ENCODE measurements at regions of chr12 and their contacts with region 1.

Region 1: DNA sequence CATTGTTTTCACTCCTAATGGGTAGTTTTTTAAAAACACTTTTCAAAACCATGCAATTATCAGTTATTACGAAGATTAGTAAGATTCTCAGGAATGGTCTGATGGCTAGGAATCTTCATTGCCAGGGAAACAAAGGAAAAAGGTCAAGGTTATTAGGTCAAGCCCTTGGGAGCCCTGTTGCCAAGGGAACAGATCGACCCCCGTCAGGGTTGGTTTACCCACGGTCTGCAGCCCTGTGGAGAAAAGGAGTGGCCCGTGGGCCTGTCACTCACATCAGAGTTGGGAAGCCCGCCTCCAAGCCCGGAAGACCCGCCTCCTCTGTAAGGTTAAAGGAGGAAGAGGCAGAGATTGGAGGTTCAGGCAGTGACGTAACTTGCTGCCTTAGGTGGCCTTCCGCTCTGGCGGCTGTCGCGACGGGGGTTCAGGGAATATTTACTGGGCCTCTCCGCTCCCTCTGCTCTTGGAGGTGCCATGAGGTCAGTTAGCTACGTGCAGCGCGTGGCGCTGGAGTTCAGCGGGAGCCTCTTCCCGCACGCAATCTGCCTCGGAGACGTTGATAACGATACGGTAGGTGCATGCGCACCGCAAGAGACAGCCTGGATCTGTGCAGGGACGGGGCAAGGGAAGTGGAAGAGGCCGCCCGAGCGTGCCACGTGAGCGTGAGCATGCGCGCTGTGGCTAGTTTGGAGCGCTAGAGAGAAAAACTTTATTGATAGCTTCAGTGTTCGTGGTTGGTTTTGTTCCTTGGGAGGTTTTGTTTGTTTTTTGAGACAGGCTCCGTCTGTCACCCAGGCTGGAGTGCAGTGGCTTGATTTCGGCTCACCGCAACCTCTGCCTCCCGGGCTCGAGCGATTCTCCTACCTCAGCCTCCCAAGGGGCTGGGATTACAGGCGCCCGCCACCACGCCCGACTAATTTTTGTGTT is at the start of gene ITFG2:
- DNase-seq: peak; percentile 90 to 98 (median 94)
- ATAC-seq: peak; percentile 91
- H3K4me3 ChIP-seq: peak within 1 kb of the TSS; percentile 82
- H3K4me3 Mint-ChIP-seq: peak within 1 kb of the TSS; percentile 96
- H3K27ac ChIP-seq: peak within 1 kb of the TSS; percentile 91 to 93
- H3K27ac Mint-ChIP-seq: peak within 1 kb of the TSS; percentile 99
- H3K4me1 ChIP-seq: peaks cover 18% of the 10 kb centered on the region
- H3K4me1 Mint-ChIP-seq: peaks cover 37% of the 10 kb centered on the region
- H3K27me3 ChIP-seq: no peaks in the 10 kb centered on the region
- H3K27me3 Mint-ChIP-seq: no peaks in the 10 kb centered on the region
- CTCF ChIP-seq: no peak
- total RNA-seq, gene ITFG2: 61.3 to 68.5 TPM

Region 2: DNA sequence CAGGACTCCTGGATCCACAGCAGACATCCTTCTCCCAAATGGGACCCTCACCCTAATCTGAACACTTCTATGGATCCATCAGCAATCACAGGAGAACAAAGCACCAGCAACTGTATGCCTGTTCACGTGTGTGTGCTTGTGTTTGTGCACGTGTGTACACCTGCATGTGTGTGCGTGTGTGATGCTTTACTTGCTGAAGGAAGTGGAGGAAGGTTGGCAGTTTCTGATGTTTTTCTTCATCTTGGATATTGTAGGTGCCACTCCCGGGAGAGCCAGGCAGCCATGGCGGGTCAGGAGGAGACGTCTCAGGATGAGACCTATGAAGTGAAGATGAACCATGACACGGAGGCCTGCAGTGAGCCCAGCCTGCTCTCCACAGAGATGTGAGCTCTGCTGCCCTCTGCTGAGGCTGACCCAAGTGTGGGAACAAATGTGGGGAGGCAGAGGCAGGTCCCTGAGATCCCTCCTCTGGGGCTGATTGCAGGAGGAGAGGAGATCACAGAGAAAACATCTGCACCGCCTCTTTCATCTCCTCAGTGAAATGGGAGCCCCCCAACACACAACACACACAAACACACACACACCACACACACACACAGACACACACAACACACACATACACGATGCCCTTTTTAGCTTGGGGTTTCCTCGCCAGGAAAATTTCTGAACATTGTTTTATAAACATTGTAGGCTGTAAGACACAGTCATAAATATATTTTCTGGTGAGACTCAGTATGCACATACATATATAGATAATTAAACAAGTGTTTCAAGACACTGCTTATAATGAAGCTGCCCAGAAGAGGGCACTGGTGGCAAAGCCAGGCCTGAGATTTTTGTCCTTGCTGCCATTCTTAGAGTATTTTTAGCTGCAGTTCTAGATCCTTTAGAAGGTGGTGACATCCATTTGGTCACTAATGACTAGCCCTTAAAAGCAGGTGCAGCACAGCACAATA is 130.0 kb before region 1 on chr12:
- CTCF ChIA-PET with region 1: interaction called, 12 read pairs
- POLR2A ChIA-PET with region 1: no interaction called
- intact Hi-C with region 1: loop called in 1 of 2 experiments (anchors 1 kb)
- DNase-seq: peak in 12 of 14 experiments; percentile 21 to 74 (median 37)
- ATAC-seq: peak; percentile 81
- H3K4me3 ChIP-seq: no peak overlapping the region
- H3K4me3 Mint-ChIP-seq: peak overlapping the region; percentile 40
- H3K27ac ChIP-seq: no peak overlapping the region
- H3K27ac Mint-ChIP-seq: peak overlapping the region; percentile 30
- H3K4me1 ChIP-seq: peaks cover 6% of the 10 kb centered on the region
- H3K4me1 Mint-ChIP-seq: peaks cover 7% of the 10 kb centered on the region
- H3K27me3 ChIP-seq: no peaks in the 10 kb centered on the region
- H3K27me3 Mint-ChIP-seq: no peaks in the 10 kb centered on the region
- CTCF ChIP-seq: peak; percentile 62

Region 3: DNA sequence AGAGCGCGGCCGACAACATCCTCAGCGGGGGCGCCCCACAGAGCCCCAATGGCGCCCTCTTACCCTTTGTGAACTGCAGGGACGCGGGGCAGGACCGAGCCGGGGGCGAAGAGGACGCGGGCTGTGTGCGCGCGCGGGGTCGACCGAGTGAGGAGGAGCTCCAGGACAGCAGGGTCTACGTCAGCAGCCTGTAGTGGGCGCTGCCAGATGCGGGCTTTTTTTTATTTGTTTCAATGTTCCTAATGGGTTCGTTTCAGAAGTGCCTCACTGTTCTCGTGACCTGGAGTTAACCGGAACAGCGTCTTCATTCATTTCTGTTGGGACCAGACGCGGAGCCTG is 121.6 kb before region 1 on chr12:
- CTCF ChIA-PET with region 1: no interaction called
- POLR2A ChIA-PET with region 1: interaction called, 9 read pairs
- intact Hi-C with region 1: loop called in 1 of 2 experiments (anchors 5 kb)
- DNase-seq: peak; percentile 19 to 82 (median 44)
- ATAC-seq: peak; percentile 67
- H3K4me3 ChIP-seq: peak overlapping the region; percentile 77
- H3K4me3 Mint-ChIP-seq: peak overlapping the region; percentile 95
- H3K27ac ChIP-seq: peak overlapping the region; percentile 50 to 83
- H3K27ac Mint-ChIP-seq: peak overlapping the region; percentile 84
- H3K4me1 ChIP-seq: peaks cover 31% of the 10 kb centered on the region
- H3K4me1 Mint-ChIP-seq: peaks cover 49% of the 10 kb centered on the region
- H3K27me3 ChIP-seq: no peaks in the 10 kb centered on the region
- H3K27me3 Mint-ChIP-seq: peaks cover 5% of the 10 kb centered on the region
- CTCF ChIP-seq: no peak

Region 4: GRCh38 chr12:2752676-2753371 is 59.7 kb before region 1 on chr12:
- CTCF ChIA-PET with region 1: no interaction called
- POLR2A ChIA-PET with region 1: no interaction called
- intact Hi-C with region 1: loop called in 1 of 2 experiments (anchors 2 kb)
- DNase-seq: peak; percentile 61 to 90 (median 73)
- ATAC-seq: peak; percentile 100
- H3K4me3 ChIP-seq: no peak overlapping the region
- H3K4me3 Mint-ChIP-seq: no peak overlapping the region
- H3K27ac ChIP-seq: no peak overlapping the region
- H3K27ac Mint-ChIP-seq: no peak overlapping the region
- H3K4me1 ChIP-seq: peaks cover 5% of the 10 kb centered on the region
- H3K4me1 Mint-ChIP-seq: no peaks in the 10 kb centered on the region
- H3K27me3 ChIP-seq: peaks cover 13 to 19% of the 10 kb centered on the region in 2 experiments
- H3K27me3 Mint-ChIP-seq: peaks cover 55% of the 10 kb centered on the region
- CTCF ChIP-seq: no peak

Region 5: GRCh38 chr12:2877047-2877952 is 64.7 kb after region 1 on chr12 and contains the starts of genes FOXM1 and RHNO1:
- CTCF ChIA-PET with region 1: no interaction called
- POLR2A ChIA-PET with region 1: interaction called, 4 read pairs
- intact Hi-C with region 1: loop called in 1 of 2 experiments (anchors 2 kb)
- DNase-seq: peak; percentile 75 to 92 (median 84)
- ATAC-seq: peak; percentile 80
- H3K4me3 ChIP-seq: peak within 1 kb of the TSS; percentile 80
- H3K4me3 Mint-ChIP-seq: peak within 1 kb of the TSS; percentile 97
- H3K27ac ChIP-seq: peak within 1 kb of the TSS; percentile 81 to 86
- H3K27ac Mint-ChIP-seq: peak within 1 kb of the TSS; percentile 99
- H3K4me1 ChIP-seq: peaks cover 39% of the 10 kb centered on the region
- H3K4me1 Mint-ChIP-seq: peaks cover 30% of the 10 kb centered on the region
- H3K27me3 ChIP-seq: no peaks in the 10 kb centered on the region
- H3K27me3 Mint-ChIP-seq: no peaks in the 10 kb centered on the region
- CTCF ChIP-seq: no peak
- total RNA-seq, gene FOXM1: 0.59 to 0.80 TPM
- total RNA-seq, gene RHNO1: 26.5 to 31.3 TPM

Region 6: GRCh38 chr12:2890388-2891239 is 78.1 kb after region 1 on chr12 and contains the start of gene TULP3:
- CTCF ChIA-PET with region 1: no interaction called
- POLR2A ChIA-PET with region 1: interaction called, 3 read pairs
- intact Hi-C with region 1: loop called in 1 of 2 experiments (anchors 1 kb)
- DNase-seq: peak; percentile 97 to 99 (median 98)
- ATAC-seq: peak; percentile 98
- H3K4me3 ChIP-seq: peak within 1 kb of the TSS; percentile 100
- H3K4me3 Mint-ChIP-seq: peak within 1 kb of the TSS; percentile 97
- H3K27ac ChIP-seq: peak within 1 kb of the TSS; percentile 74 to 77
- H3K27ac Mint-ChIP-seq: peak within 1 kb of the TSS; percentile 83
- H3K4me1 ChIP-seq: peaks cover 19% of the 10 kb centered on the region
- H3K4me1 Mint-ChIP-seq: peaks cover 29% of the 10 kb centered on the region
- H3K27me3 ChIP-seq: no peaks in the 10 kb centered on the region
- H3K27me3 Mint-ChIP-seq: no peaks in the 10 kb centered on the region
- CTCF ChIP-seq: no peak
- total RNA-seq, gene TULP3: 4.2 to 5.5 TPM

Measured in CD4-positive, alpha-beta T cell (primary cell).